ENCODE measurements at regions of chr11 and their contacts with region 1.

Region 1: DNA sequence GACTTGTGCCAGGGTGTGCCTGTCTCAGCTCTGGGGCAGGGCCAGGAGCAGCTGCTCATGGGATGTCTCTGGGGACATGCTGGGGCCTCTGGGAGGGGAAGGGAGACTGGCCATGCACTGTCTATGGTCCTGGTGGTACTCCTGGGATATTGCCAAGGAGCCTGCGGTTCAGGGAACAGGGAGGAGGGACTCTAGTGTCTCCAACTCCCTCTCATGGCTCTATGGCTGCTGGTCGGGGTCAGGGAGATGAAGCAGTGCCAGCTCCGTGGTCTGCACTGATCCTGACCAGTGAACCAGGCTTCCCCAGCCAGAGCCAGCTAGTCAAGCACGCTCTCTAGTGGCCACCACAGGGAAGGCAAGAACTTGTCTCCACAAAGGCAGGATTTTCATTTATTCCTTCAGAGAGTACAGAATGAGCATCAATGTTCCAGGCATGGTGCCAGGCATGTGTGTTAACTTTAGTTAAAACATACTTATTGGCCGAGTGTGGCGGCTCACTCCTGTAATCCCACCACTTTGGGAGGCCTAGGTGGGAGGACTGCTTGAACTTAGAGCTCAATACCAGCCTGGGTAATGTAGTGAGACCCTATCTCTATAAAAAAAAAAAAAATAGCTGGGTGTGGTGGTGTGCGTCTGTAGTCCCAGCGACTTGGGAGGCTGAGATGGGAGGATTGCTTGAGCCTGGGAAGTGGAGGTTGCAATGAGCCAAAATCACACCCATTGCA is 2.5 kb upstream of the BEST1 start:
- DNase-seq: peak; percentile 98
- H3K4me3 ChIP-seq: no peak overlapping the region
- H3K27ac ChIP-seq: peak overlapping the region in 1 of 4 donors; percentile 38
- H3K4me1 ChIP-seq: peaks cover 13 to 34% (median 31%) of the 10 kb centered on the region in 4 donors
- H3K27me3 ChIP-seq: peaks cover 0 to 9% (median 0%) of the 10 kb centered on the region in 4 donors
- CTCF ChIP-seq: peak; percentile 90 to 98 (median 95)
- EP300 ChIP-seq: no peak
- POLR2A ChIP-seq: no peak

Region 2: DNA sequence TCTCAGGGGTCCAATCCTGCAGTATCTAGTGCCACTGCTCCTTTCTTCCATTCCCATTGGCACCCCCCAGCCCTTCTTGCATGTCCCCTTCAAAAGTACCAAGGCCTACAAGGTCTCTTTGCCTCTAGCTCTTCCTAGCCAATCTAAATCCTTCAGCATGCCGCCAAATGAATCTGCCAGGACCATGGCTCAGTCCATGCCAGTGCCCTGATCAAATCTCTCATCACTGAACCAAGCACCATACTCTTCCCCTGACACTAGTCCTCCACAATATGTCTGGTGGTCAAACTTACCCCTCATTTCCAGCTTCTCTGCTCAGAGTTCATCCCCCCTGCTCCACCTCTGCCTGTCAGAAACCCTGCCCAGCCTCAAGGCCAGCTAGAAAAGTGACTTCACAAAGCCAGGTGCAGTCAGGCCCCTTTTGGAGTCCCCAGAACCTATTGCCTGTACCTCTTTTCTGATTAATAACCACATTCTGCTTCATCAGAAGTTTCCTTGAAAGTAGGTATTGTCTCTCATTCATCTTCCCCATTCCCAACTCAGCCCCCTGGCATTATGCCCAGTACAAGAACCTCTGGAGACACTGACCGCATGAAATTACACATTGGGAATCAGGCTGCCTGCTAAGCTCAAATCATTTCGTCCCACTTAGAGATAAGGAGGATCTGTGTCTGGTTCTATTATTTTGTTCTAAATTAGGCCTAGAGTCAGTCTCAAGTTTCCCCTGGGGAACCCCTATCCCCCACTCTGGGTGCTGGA is 143.6 kb before region 1 on chr11:
- intact Hi-C with region 1: loop called (anchors 5 kb)
- DNase-seq: no peak
- H3K4me3 ChIP-seq: no peak overlapping the region
- H3K27ac ChIP-seq: no peak overlapping the region
- H3K4me1 ChIP-seq: no peaks in the 10 kb centered on the region
- H3K27me3 ChIP-seq: no peaks in the 10 kb centered on the region
- CTCF ChIP-seq: no peak
- EP300 ChIP-seq: no peak
- POLR2A ChIP-seq: no peak

Region 3: DNA sequence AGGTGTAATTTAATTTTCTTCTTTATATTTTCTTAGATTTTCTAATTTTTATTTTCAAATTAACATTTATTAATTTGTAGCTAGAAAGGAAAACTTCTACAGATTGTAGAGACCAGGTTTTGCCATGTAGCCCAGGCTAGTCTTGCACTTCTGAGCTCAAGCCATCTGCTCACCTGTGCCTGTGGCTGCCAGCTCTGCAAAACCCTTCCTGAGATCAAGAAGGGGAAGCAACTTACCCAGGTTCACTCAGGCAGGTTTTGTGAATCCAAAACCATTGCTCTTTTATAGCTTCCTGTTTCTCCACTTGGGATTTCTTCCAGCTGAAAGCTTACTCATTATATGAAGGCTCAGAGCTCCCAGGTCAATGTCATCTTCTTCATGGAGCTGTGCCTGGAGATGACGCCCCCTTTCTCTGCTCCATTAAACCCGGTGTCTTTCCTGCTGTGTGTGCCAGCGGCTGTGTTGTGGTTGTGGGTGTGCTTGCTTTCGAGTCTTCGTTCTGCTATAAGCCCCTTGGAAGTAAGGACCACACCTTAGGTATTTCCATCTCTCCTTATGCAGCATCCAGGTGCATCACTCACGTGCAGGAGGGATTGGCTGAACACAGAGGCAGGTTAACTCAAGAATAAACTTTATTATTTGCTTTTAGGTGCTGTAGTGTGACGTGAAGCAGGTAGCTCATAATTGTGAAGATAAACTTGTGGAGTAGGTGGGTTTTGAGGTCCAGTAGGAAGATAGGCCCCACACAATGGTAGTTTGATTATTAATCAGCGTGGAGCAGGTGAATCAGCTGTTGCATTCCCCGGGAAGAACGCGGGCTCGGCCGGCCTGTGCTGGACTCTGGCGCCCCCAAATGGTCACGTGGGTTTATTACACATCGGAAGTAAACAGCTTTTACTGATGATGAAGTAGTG is 134.0 kb after region 1 on chr11:
- intact Hi-C with region 1: loop called (anchors 5 kb)
- DNase-seq: peak; percentile 95
- H3K4me3 ChIP-seq: peak overlapping the region in 1 of 4 donors; percentile 5
- H3K27ac ChIP-seq: no peak overlapping the region
- H3K4me1 ChIP-seq: peaks cover 0 to 9% (median 6%) of the 10 kb centered on the region in 4 donors
- H3K27me3 ChIP-seq: no peaks in the 10 kb centered on the region
- CTCF ChIP-seq: peak; percentile 91 to 94 (median 91)
- EP300 ChIP-seq: no peak
- POLR2A ChIP-seq: no peak